ENCODE measurements at regions of chr13 and their contacts with region 1.

Region 1: GRCh38 chr13:97753942-97754670 is 199.4 kb upstream of the IPO5 start:
- DNase-seq: no peak
- H3K4me3 Mint-ChIP-seq: no peak overlapping the region
- H3K27ac Mint-ChIP-seq: no peak overlapping the region
- H3K4me1 Mint-ChIP-seq: no peaks in the 10 kb centered on the region
- H3K27me3 Mint-ChIP-seq: no peaks in the 10 kb centered on the region

Region 2: GRCh38 chr13:97492257-97492656 is 261.8 kb before region 1 on chr13:
- intact Hi-C with region 1: loop called (anchors 2 kb)
- DNase-seq: no peak
- H3K4me3 Mint-ChIP-seq: no peak overlapping the region
- H3K27ac Mint-ChIP-seq: no peak overlapping the region
- H3K4me1 Mint-ChIP-seq: no peaks in the 10 kb centered on the region
- H3K27me3 Mint-ChIP-seq: no peaks in the 10 kb centered on the region